Panc1 (cell line): ENCODE measurements at regions of chr9 and their contacts with region 1.

Region 1: DNA sequence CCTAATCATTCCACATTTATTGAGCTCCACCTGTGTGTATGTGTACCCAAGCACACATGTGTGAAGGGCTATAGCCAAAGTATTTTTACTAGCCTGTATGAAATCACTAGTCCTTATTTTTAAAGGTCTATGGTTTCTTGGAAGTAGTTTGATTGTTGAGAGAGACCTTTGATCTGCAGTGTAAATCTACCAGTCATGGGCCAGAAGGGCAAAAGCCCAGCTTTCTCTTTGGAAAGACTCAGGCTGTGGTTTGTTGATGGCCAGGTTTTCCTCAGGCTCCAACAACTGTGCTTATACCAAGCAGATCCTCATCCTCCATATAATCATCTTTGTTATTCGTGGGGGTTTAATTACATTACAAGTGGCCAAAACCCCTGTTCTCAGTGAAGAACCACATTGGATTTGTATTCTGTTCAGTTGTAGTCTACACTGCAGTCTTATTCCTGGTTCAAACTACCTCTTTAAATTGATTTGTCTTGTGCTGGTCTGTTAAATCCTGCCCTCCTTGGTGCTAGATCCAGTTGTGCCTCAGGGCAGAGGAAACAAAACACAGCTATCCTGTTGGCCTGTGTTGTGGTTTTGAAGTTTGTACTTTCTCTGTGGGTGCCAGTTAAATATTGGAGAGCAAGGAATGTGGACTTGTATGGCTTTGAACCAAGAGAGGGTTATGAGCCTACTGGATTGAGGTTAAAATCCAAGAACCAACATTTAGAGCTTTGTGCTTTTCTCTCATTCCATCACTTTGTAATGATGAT is 13.3 kb downstream of the CDC26 start:
- DNase-seq: no peak
- ATAC-seq: no peak
- H3K4me3 ChIP-seq: no peak overlapping the region
- H3K27ac ChIP-seq: no peak overlapping the region
- H3K4me1 ChIP-seq: no peaks in the 10 kb centered on the region
- H3K27me3 ChIP-seq: no peaks in the 10 kb centered on the region
- CTCF ChIP-seq: no peak

Region 2: GRCh38 chr9:113231701-113232100 is 30.4 kb before region 1 on chr9:
- CTCF ChIA-PET with region 1: interaction called, 13 read pairs
- POLR2A ChIA-PET with region 1: no interaction called
- in situ Hi-C with region 1: no loop called
- intact Hi-C with region 1: no loop called
- DNase-seq: no peak
- ATAC-seq: no peak
- H3K4me3 ChIP-seq: no peak overlapping the region
- H3K27ac ChIP-seq: no peak overlapping the region
- H3K4me1 ChIP-seq: no peaks in the 10 kb centered on the region
- H3K27me3 ChIP-seq: no peaks in the 10 kb centered on the region
- CTCF ChIP-seq: no peak

Region 3: DNA sequence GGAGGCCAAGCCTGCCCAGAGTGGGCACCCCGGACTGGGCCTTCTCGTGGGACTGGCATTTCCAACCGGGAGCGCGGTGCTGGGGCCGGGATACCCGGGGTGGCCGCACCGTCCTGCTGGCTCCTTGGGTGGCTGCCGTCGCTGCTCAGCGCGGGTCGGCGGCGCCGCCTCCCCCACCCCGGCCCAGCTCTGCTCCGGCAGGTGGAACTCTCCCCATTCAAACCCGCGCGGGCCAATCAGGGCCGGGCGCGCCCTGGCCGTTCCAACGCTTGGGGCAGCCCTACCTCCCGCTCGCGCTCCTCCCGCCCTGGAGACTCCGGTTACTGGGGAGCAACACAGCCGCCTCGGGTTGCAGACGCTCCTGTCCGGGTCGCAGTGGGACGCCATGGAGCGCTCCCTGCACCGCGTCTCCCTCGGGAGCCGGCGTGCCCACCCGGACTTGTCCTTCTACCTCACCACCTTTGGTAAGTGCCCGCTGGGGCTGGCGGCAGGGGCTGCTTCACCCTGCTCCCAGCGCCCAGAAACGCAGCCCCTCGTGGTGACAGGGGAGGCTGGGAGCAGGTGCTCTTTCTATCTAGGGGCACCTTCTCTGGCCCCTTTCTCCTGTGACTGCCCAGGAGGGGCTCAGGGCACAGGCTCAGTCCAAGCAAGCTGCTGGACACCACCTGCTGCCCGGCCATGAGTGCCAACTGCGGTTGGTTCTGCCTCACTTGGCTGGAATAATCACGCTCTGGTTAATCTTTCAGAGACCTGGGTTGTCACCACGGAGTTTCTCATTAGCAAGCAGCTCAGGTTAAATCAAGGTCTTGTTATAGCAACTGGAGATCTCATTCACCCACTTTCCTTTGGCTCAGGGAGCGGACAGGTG is 201.6 kb after region 1 on chr9 and contains the start of gene RGS3:
- CTCF ChIA-PET with region 1: no interaction called
- POLR2A ChIA-PET with region 1: no interaction called
- in situ Hi-C with region 1: no loop called
- intact Hi-C with region 1: no loop called
- DNase-seq: no peak
- ATAC-seq: peak; percentile 97
- H3K4me3 ChIP-seq: peak within 1 kb of the TSS; percentile 44 to 57
- H3K27ac ChIP-seq: peak within 1 kb of the TSS; percentile 71
- H3K4me1 ChIP-seq: peaks cover 22% of the 10 kb centered on the region
- H3K27me3 ChIP-seq: no peaks in the 10 kb centered on the region
- CTCF ChIP-seq: no peak
- total RNA-seq, gene RGS3: 15.1 TPM